SK-N-SH (cell line): ENCODE measurements at regions of chr6 and their contacts with region 1.

Region 1: GRCh38 chr6:121055572-121056163 is 278.6 kb downstream of the TBC1D32 start:
- DNase-seq: peak; percentile 44
- H3K4me3 ChIP-seq: no peak overlapping the region; a peak in 1 of 4 replicates
- H3K27ac ChIP-seq: no peak overlapping the region
- H3K4me1 ChIP-seq: no peaks in the 10 kb centered on the region
- H3K27me3 ChIP-seq: no peaks in the 10 kb centered on the region
- CTCF ChIP-seq: peak; percentile 85
- EP300 ChIP-seq: no peak
- RAD21 ChIP-seq: peak; percentile 86

Region 2: DNA sequence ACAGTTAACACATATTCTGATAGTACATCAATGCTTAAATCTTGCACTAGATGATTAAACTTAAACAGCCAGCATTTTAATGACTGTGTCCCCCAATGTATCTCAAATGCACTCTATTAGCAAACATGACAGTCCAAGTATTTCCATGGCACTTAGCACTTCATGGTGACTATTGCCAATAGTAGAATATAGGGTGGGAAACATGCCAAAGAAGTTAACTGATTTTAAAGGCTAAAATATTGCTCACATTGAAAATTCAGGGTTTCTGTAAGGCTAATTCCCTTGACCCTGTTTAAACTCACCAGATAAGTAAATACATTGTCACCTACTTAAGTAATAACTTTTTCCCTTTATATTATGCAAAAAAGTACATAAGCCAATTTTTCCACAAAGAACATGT is 11.7 kb after region 1 on chr6:
- CTCF ChIA-PET with region 1: interaction called, 10 read pairs
- POLR2A ChIA-PET with region 1: no interaction called
- DNase-seq: no peak
- H3K4me3 ChIP-seq: no peak overlapping the region
- H3K27ac ChIP-seq: no peak overlapping the region
- H3K4me1 ChIP-seq: no peaks in the 10 kb centered on the region
- H3K27me3 ChIP-seq: no peaks in the 10 kb centered on the region
- CTCF ChIP-seq: no peak
- EP300 ChIP-seq: no peak
- RAD21 ChIP-seq: no peak

Region 3: GRCh38 chr6:121305957-121306607 is 250.4 kb after region 1 on chr6:
- CTCF ChIA-PET with region 1: interaction called, 30 read pairs
- POLR2A ChIA-PET with region 1: no interaction called
- DNase-seq: peak; percentile 27
- H3K4me3 ChIP-seq: no peak overlapping the region; a peak in 1 of 4 replicates
- H3K27ac ChIP-seq: no peak overlapping the region
- H3K4me1 ChIP-seq: no peaks in the 10 kb centered on the region; a peak in 1 of 4 replicates
- H3K27me3 ChIP-seq: no peaks in the 10 kb centered on the region
- CTCF ChIP-seq: peak; percentile 62
- EP300 ChIP-seq: no peak
- RAD21 ChIP-seq: peak; percentile 78

Region 4: DNA sequence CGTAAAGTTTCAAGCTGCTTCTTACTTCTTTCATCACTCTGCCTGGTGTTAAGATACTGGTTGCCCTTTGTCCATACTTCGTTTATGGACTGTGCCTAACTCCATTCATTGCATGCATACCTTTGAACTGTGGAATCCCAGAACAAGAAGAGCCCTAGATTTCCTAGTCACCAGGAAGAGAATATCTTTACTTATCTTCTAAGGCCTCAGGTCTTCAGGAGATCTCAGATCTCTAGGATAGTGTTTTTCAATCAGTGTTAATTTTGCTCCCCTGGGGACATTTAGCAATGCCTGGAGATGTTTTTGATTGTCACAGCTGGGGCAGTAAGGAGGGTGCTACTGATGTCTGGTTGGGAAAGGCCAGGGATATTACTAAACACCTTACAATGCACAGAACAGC is 344.3 kb after region 1 on chr6:
- CTCF ChIA-PET with region 1: interaction called, 17 read pairs
- POLR2A ChIA-PET with region 1: no interaction called
- DNase-seq: no peak
- H3K4me3 ChIP-seq: no peak overlapping the region
- H3K27ac ChIP-seq: no peak overlapping the region
- H3K4me1 ChIP-seq: no peaks in the 10 kb centered on the region
- H3K27me3 ChIP-seq: no peaks in the 10 kb centered on the region
- CTCF ChIP-seq: no peak
- EP300 ChIP-seq: no peak
- RAD21 ChIP-seq: no peak